ENCODE measurements at regions of chr14 and their contacts with region 1.

Region 1: GRCh38 chr14:60248697-60249318 is at the start of gene PPM1A:
- DNase-seq: peak; percentile 99
- ATAC-seq: peak; percentile 72
- H3K4me3 ChIP-seq: peak within 1 kb of the TSS; percentile 86 to 96 (median 92)
- H3K4me3 Mint-ChIP-seq: peak within 1 kb of the TSS; percentile 99
- H3K27ac ChIP-seq: peak within 1 kb of the TSS; percentile 100
- H3K27ac Mint-ChIP-seq: peak within 1 kb of the TSS; percentile 100
- H3K4me1 ChIP-seq: peaks cover 16 to 24% of the 10 kb centered on the region in 2 donors
- H3K4me1 Mint-ChIP-seq: peaks cover 47% of the 10 kb centered on the region
- H3K27me3 ChIP-seq: no peaks in the 10 kb centered on the region
- H3K27me3 Mint-ChIP-seq: no peaks in the 10 kb centered on the region
- CTCF ChIP-seq: no peak
- total RNA-seq, gene PPM1A: 49.3 and 59.0 TPM in 2 replicates

Region 2: GRCh38 chr14:59483900-59484638 is 764.7 kb before region 1 on chr14 and contains the starts of genes JKAMP and L3HYPDH:
- CTCF ChIA-PET with region 1: no interaction called
- POLR2A ChIA-PET with region 1: interaction called, 5 read pairs
- intact Hi-C with region 1: loop called (anchors 1 kb)
- DNase-seq: peak; percentile 96
- ATAC-seq: peak; percentile 92
- H3K4me3 ChIP-seq: peak within 1 kb of the TSS; percentile 83 to 97 (median 93)
- H3K4me3 Mint-ChIP-seq: peak within 1 kb of the TSS; percentile 96
- H3K27ac ChIP-seq: peak within 1 kb of the TSS; percentile 57 to 79
- H3K27ac Mint-ChIP-seq: peak within 1 kb of the TSS; percentile 90
- H3K4me1 ChIP-seq: peaks cover 36 to 40% of the 10 kb centered on the region in 2 donors
- H3K4me1 Mint-ChIP-seq: peaks cover 56% of the 10 kb centered on the region
- H3K27me3 ChIP-seq: no peaks in the 10 kb centered on the region
- H3K27me3 Mint-ChIP-seq: no peaks in the 10 kb centered on the region
- CTCF ChIP-seq: peak; percentile 70
- total RNA-seq, gene JKAMP: 25.7 and 30.3 TPM in 2 replicates
- total RNA-seq, gene L3HYPDH: 67.3 and 74.5 TPM in 2 replicates

Region 3: GRCh38 chr14:60091550-60092530 is 157.0 kb before region 1 on chr14 and contains the start of gene PCNX4:
- CTCF ChIA-PET with region 1: interaction called, 5 read pairs
- POLR2A ChIA-PET with region 1: interaction called, 47 read pairs
- intact Hi-C with region 1: loop called (anchors 1 kb)
- DNase-seq: peak; percentile 99
- ATAC-seq: peak; percentile 90
- H3K4me3 ChIP-seq: peak within 1 kb of the TSS; percentile 72 to 93 (median 86)
- H3K4me3 Mint-ChIP-seq: peak within 1 kb of the TSS; percentile 94
- H3K27ac ChIP-seq: peak within 1 kb of the TSS; percentile 95 to 97
- H3K27ac Mint-ChIP-seq: peak within 1 kb of the TSS; percentile 98
- H3K4me1 ChIP-seq: peaks cover 19 to 21% of the 10 kb centered on the region in 2 donors
- H3K4me1 Mint-ChIP-seq: peaks cover 41% of the 10 kb centered on the region
- H3K27me3 ChIP-seq: peaks cover 0 to 4% (median 0%) of the 10 kb centered on the region in 4 experiments
- H3K27me3 Mint-ChIP-seq: no peaks in the 10 kb centered on the region
- CTCF ChIP-seq: no peak
- total RNA-seq, gene PCNX4: 53.4 and 70.1 TPM in 2 replicates

Region 4: DNA sequence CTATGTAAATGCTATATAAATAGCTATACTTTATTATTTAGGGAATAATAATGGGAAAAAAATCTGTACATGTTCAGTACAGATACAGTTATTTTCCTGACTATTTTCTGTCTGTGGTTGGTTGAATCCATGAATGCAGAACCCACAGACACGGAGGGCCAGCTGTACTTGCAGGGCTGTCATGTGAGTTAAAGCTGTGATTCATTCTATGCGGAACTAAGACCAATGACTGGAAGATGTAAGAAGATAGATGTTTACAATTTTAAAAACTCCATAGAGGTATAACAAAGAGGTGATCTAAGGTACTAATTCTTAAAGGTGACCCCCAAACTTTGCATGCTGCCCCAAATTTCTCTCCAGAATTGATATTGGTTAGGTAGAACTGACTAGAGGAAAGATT is 142.5 kb before region 1 on chr14:
- CTCF ChIA-PET with region 1: no interaction called
- POLR2A ChIA-PET with region 1: no interaction called
- intact Hi-C with region 1: no loop called
- DNase-seq: peak; percentile 17
- ATAC-seq: no peak
- H3K4me3 ChIP-seq: no peak overlapping the region
- H3K4me3 Mint-ChIP-seq: no peak overlapping the region
- H3K27ac ChIP-seq: no peak overlapping the region
- H3K27ac Mint-ChIP-seq: no peak overlapping the region
- H3K4me1 ChIP-seq: no peaks in the 10 kb centered on the region
- H3K4me1 Mint-ChIP-seq: peaks cover 23% of the 10 kb centered on the region
- H3K27me3 ChIP-seq: no peaks in the 10 kb centered on the region
- H3K27me3 Mint-ChIP-seq: no peaks in the 10 kb centered on the region
- CTCF ChIP-seq: no peak

Region 5: GRCh38 chr14:60266021-60266937 is 17.5 kb after region 1 on chr14:
- CTCF ChIA-PET with region 1: interaction called, 8 read pairs
- POLR2A ChIA-PET with region 1: interaction called, 4 read pairs
- intact Hi-C with region 1: loop called (anchors 2 kb)
- DNase-seq: peak; percentile 35
- ATAC-seq: peak; percentile 28
- H3K4me3 ChIP-seq: no peak overlapping the region
- H3K4me3 Mint-ChIP-seq: no peak overlapping the region
- H3K27ac ChIP-seq: no peak overlapping the region
- H3K27ac Mint-ChIP-seq: no peak overlapping the region
- H3K4me1 ChIP-seq: no peaks in the 10 kb centered on the region
- H3K4me1 Mint-ChIP-seq: peaks cover 14% of the 10 kb centered on the region
- H3K27me3 ChIP-seq: no peaks in the 10 kb centered on the region
- H3K27me3 Mint-ChIP-seq: no peaks in the 10 kb centered on the region
- CTCF ChIP-seq: peak; percentile 78

Region 6: DNA sequence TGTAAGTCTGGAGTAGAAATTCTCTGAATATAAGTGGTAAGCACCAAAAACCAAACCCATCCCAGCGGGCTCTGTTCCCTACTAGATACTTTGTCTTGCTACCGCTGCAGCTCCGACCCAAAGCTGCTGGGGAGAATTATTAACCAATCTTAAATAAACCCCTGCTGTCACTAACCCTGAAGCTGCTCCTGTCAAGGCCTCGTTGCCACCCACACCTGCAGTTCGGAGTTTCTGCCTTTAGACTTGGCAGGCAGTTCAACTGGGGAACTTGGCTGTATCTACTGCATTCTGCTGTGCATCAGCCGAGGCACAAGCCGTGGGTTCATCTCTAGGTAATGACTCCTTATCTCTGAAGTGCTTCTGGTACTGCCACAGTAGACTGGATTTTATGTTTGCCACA is 55.7 kb after region 1 on chr14:
- CTCF ChIA-PET with region 1: no interaction called
- POLR2A ChIA-PET with region 1: no interaction called
- intact Hi-C with region 1: no loop called
- DNase-seq: no peak
- ATAC-seq: no peak
- H3K4me3 ChIP-seq: no peak overlapping the region
- H3K4me3 Mint-ChIP-seq: no peak overlapping the region
- H3K27ac ChIP-seq: no peak overlapping the region
- H3K27ac Mint-ChIP-seq: no peak overlapping the region
- H3K4me1 ChIP-seq: no peaks in the 10 kb centered on the region
- H3K4me1 Mint-ChIP-seq: peaks cover 9% of the 10 kb centered on the region
- H3K27me3 ChIP-seq: no peaks in the 10 kb centered on the region
- H3K27me3 Mint-ChIP-seq: no peaks in the 10 kb centered on the region
- CTCF ChIP-seq: no peak

Region 7: DNA sequence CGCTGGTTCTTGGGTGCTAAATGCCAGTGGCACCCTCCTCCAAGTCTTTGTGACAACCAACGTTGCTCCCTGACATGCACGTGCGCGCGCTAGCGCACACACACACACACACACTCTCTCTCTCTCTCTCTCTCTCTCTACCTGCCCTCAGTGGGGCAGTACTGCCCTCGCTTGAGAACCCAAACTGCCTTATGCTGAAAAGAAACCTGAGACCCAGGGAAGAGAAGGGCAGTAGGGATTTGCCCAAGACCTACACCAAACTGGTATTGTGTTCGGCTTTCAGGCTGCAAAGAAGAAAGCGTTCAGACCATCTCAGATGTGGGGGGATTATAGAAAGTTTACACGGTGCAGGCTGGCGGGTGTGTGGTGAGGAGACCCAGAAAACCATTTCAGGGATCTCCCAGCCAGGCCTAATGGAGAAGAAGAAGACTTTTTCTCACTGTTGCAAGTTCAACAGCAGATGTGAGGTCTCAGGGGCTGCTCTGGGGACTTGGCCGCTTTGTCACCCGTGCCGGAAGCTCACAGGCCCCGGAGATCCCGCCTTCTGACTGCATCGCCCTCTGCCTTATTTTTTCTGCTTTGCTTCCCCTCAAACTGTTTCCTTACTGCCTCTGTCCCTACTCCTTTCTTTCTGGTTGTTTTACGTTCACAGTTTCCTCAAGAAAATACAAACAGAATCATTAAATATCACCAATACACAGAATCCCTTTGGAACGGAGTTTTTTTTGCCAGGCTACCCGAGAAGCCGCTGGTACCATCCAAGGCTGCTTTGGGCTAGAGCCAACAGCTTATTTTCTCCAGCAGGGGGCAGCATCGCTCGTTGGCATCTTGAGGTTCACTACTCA is 82.6 kb after region 1 on chr14:
- CTCF ChIA-PET with region 1: interaction called, 21 read pairs
- POLR2A ChIA-PET with region 1: interaction called, 10 read pairs
- intact Hi-C with region 1: loop called (anchors 1 kb)
- DNase-seq: peak; percentile 85
- ATAC-seq: peak; percentile 66
- H3K4me3 ChIP-seq: peak overlapping the region; percentile 49 to 87 (median 73)
- H3K4me3 Mint-ChIP-seq: peak overlapping the region; percentile 90
- H3K27ac ChIP-seq: peak overlapping the region; percentile 63 to 68
- H3K27ac Mint-ChIP-seq: peak overlapping the region; percentile 71
- H3K4me1 ChIP-seq: peaks cover 16 to 20% of the 10 kb centered on the region in 2 donors
- H3K4me1 Mint-ChIP-seq: peaks cover 26% of the 10 kb centered on the region
- H3K27me3 ChIP-seq: peaks cover 0 to 17% (median 4%) of the 10 kb centered on the region in 4 experiments
- H3K27me3 Mint-ChIP-seq: peaks cover 23% of the 10 kb centered on the region
- CTCF ChIP-seq: peak; percentile 98

Region 8: GRCh38 chr14:61761959-61762786 is 1513.4 kb after region 1 on chr14 and contains the start of gene SNAPC1:
- CTCF ChIA-PET with region 1: no interaction called
- POLR2A ChIA-PET with region 1: no interaction called
- intact Hi-C with region 1: loop called (anchors 5 kb)
- DNase-seq: peak; percentile 99
- ATAC-seq: peak; percentile 98
- H3K4me3 ChIP-seq: peak within 1 kb of the TSS; percentile 93 to 95 (median 95)
- H3K4me3 Mint-ChIP-seq: peak within 1 kb of the TSS; percentile 95
- H3K27ac ChIP-seq: peak within 1 kb of the TSS; percentile 90 to 91
- H3K27ac Mint-ChIP-seq: peak within 1 kb of the TSS; percentile 99
- H3K4me1 ChIP-seq: peaks cover 19 to 22% of the 10 kb centered on the region in 2 donors
- H3K4me1 Mint-ChIP-seq: peaks cover 36% of the 10 kb centered on the region
- H3K27me3 ChIP-seq: no peaks in the 10 kb centered on the region
- H3K27me3 Mint-ChIP-seq: no peaks in the 10 kb centered on the region
- CTCF ChIP-seq: no peak
- total RNA-seq, gene SNAPC1: 6.6 and 7.1 TPM in 2 replicates